Adrenal gland (tissue), 19 donors: ENCODE measurements at regions of chr6 and their contacts with region 1.

Region 1: DNA sequence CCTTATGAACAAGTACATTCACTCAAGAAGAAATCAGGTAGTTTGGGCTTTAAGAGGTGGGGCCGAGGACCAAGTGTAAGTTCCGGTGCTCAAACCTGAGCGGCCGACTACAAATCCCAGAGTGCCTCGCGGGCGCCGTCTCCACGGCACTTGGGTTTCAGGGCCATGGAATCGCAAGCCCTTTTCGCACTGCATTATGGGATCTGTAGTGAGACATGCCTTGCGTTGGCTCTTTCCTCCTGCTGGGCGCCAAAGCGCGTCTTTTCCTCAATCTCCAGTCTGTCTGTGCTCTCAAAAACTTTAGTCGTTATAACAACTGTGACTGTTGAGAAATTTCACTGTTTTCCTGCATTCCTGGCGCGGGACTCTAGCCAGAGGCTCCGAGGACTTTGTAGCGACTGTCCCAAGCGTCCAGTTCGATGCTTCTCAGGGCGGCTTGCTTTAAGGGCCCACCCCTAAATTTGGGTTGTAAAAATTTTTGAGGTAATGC is 433 bp upstream of the FBXO9 start:
- DNase-seq: peak; percentile 96 to 99 (median 98)
- H3K4me3 ChIP-seq: peak overlapping the region; percentile 70 to 96 (median 86)
- H3K27ac ChIP-seq: peak overlapping the region; percentile 82 to 96 (median 93)
- H3K4me1 ChIP-seq: peaks cover 26 to 56% of the 10 kb centered on the region in 2 donors
- H3K27me3 ChIP-seq: no peaks in the 10 kb centered on the region
- CTCF ChIP-seq: peak in 1 of 6 experiments; percentile 31
- POLR2A ChIP-seq: peak in 1 of 2 donors; percentile 75

Region 2: DNA sequence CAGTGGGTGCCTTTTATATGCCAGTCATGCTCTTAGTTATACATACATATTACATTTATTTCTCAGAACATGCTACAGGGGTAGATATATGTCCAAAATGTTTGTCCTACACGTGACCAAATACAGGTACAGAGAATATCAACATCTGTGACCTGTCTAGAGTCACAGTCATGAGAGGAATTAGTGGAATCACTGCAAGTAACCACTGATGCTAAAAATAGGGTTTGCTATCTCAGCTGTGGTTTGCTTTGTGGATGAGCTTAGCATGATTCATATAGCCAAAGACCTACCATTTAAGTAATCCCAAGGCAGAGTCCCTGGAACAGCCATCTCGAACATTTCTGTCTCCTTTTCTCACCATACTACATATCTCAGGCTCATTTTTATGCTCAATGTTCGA is 187.6 kb before region 1 on chr6:
- intact Hi-C with region 1: loop called in 1 of 2 experiments (anchors 10 kb)
- DNase-seq: no peak
- H3K4me3 ChIP-seq: no peak overlapping the region
- H3K27ac ChIP-seq: no peak overlapping the region
- H3K4me1 ChIP-seq: no peaks in the 10 kb centered on the region
- H3K27me3 ChIP-seq: no peaks in the 10 kb centered on the region
- CTCF ChIP-seq: no peak
- POLR2A ChIP-seq: no peak

Region 3: GRCh38 chr6:52995913-52996645 is 68.7 kb before region 1 on chr6:
- intact Hi-C with region 1: loop called in 1 of 2 experiments (anchors 5 kb)
- DNase-seq: peak; percentile 39 to 87 (median 48)
- H3K4me3 ChIP-seq: peak overlapping the region in 1 of 4 donors; percentile 37
- H3K27ac ChIP-seq: peak overlapping the region in 4 of 5 donors; percentile 49 to 95 (median 94)
- H3K4me1 ChIP-seq: peaks cover 11 to 23% of the 10 kb centered on the region in 2 donors
- H3K27me3 ChIP-seq: no peaks in the 10 kb centered on the region
- CTCF ChIP-seq: no peak
- POLR2A ChIP-seq: no peak